Heart left ventricle (tissue), 16 donors: ENCODE measurements at regions of chr3 and their contacts with region 1.

Region 1: DNA sequence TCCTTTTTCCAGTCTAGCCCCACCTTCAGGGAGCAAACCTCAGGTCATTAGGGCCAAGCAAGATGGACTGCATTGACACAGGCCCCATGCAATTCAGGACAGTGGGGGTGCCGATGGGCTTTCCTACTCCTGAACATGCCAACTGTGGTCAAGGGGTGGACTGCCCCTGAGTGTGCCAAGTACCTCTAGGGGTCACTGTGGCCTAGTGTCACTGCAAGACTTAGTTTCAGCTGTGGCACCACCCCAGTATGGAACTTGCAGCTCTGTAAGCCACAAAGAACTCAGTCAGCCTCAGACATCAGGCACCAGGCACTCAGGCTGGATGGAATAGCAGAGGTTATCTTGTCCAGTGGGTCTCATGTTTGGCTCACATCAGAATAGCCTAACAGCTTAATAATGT is 32.3 kb downstream of the EXOG start:
- DNase-seq: peak in 2 of 5 donors; percentile 46 to 63
- ATAC-seq: peak; percentile 5 to 44 (median 32)
- H3K4me3 ChIP-seq: no peak overlapping the region
- H3K27ac ChIP-seq: peak overlapping the region in 5 of 12 donors; percentile 1 to 51 (median 29)
- H3K4me1 ChIP-seq: peaks cover 0 to 32% (median 14%) of the 10 kb centered on the region in 12 donors
- H3K27me3 ChIP-seq: no peaks in the 10 kb centered on the region
- CTCF ChIP-seq: peak in 8 of 12 donors; percentile 9 to 45 (median 28)
- POLR2A ChIP-seq: no peak

Region 2: DNA sequence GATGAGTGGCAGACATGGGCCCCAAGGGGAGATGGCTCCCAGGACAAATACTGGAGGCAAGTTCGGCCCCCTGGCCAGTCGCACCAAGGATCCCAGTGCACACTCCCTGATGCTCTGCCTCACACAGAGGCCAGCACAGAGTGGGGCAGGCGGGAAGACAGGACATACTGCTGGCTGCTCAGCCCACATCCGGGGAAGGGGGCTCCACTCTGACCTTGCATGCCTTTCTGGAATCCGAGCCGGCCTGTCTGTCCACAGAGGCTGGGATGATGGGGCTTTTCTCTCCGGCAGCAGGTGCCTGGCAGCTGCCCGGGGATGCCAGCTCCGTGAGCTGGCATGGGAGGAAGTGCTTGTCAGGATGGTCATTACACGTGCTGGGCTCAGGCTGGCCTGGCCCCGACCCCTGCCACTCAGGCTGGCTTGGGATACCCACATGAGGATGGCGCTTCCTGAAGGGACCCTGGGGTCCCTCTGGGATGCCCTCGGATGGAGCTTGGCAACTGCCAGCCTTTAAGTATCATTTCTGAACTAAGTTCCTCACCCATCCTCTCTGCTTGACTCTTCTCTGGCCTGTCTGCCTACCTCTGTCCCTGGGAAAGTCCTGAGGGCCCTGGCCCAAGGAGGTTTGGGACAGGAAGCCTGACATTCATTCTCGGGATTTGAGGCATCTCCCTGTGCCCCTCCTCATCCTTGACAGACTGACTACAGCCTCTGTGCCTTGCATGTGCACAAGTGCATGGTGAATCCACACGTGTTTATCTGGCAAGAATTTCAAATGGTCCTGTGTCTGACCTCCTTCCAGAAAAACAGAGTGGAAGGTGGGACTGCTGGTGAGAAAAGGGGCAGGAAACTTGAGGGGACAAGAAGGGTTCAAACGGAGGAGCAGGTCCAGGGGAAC is 14.2 kb after region 1 on chr3:
- intact Hi-C with region 1: loop called in 2 of 10 experiments (anchors 1 kb)
- DNase-seq: peak in 2 of 5 donors; percentile 54 to 67
- ATAC-seq: peak in 3 of 4 donors; percentile 1 to 27 (median 19)
- H3K4me3 ChIP-seq: no peak overlapping the region
- H3K27ac ChIP-seq: peak overlapping the region; percentile 4 to 96 (median 80)
- H3K4me1 ChIP-seq: peaks cover 0 to 77% (median 37%) of the 10 kb centered on the region in 12 donors
- H3K27me3 ChIP-seq: no peaks in the 10 kb centered on the region
- CTCF ChIP-seq: no peak
- POLR2A ChIP-seq: no peak

Region 3: GRCh38 chr3:38579551-38580449 is 51.3 kb after region 1 on chr3:
- intact Hi-C with region 1: loop called in 4 of 10 experiments (anchors 2 to 5 kb)
- DNase-seq: peak; percentile 63 to 85 (median 75)
- ATAC-seq: peak; percentile 73 to 79 (median 75)
- H3K4me3 ChIP-seq: no peak overlapping the region
- H3K27ac ChIP-seq: peak overlapping the region in 11 of 12 donors; percentile 71 to 99 (median 89)
- H3K4me1 ChIP-seq: peaks cover 0 to 85% (median 36%) of the 10 kb centered on the region in 12 donors
- H3K27me3 ChIP-seq: no peaks in the 10 kb centered on the region
- CTCF ChIP-seq: no peak
- POLR2A ChIP-seq: peak in 1 of 2 donors; percentile 0

Region 4: DNA sequence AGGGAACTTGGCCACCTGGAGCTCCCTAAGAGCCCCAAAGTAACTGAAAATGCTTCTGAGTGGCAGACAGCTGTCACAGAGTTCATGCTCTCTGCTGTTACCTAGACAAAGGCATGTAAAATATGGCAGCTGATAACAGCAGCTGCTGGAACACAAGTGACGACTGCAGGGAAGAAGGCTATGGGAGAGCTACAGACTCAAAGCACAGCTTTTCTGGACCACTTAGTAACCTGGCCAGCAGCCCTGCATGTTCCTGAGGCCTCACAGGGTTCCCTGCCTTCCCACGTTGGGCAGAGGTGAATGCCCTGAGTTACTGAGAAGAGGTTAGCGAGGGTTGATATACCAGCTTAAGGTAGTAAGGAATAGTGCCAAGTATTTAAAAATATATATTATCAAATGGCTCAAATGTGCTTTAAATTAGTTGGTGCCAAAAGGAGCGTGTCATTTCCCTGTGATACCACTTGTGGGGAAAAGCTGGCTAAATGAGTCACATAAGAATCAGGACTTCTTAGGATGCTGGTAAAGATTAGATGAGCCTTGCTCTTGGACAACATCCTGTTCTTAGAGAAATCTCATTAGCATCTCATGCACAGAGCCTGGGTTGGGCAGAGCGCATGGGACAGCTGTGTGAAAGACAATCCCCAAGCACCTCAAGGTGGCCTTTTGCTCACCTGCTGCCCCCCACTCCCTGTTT is 197.4 kb after region 1 on chr3:
- intact Hi-C with region 1: loop called in 2 of 10 experiments (anchors 10 kb)
- DNase-seq: peak in 4 of 5 donors; percentile 60 to 87 (median 74)
- ATAC-seq: peak; percentile 90 to 92 (median 92)
- H3K4me3 ChIP-seq: no peak overlapping the region
- H3K27ac ChIP-seq: peak overlapping the region in 11 of 12 donors; percentile 38 to 87 (median 74)
- H3K4me1 ChIP-seq: peaks cover 0 to 36% (median 16%) of the 10 kb centered on the region in 12 donors
- H3K27me3 ChIP-seq: no peaks in the 10 kb centered on the region
- CTCF ChIP-seq: no peak
- POLR2A ChIP-seq: no peak